A673 (cell line): ENCODE measurements at regions of chr16 and their contacts with region 1.

Region 1: GRCh38 chr16:4339909-4340308 is 11.2 kb downstream of the PAM16 start:
- DNase-seq: peak; percentile 90
- H3K4me3 ChIP-seq: no peak overlapping the region
- H3K27ac ChIP-seq: peak overlapping the region; percentile 53
- H3K4me1 ChIP-seq: peaks cover 23% of the 10 kb centered on the region
- H3K27me3 ChIP-seq: no peaks in the 10 kb centered on the region
- CTCF ChIP-seq: peak; percentile 54

Region 2: GRCh38 chr16:4097811-4098240 is 242.1 kb before region 1 on chr16:
- CTCF ChIA-PET with region 1: no interaction called
- POLR2A ChIA-PET with region 1: interaction called, 10 read pairs
- intact Hi-C with region 1: no loop called
- DNase-seq: no peak
- H3K4me3 ChIP-seq: no peak overlapping the region
- H3K27ac ChIP-seq: no peak overlapping the region
- H3K4me1 ChIP-seq: peaks cover 36% of the 10 kb centered on the region
- H3K27me3 ChIP-seq: no peaks in the 10 kb centered on the region
- CTCF ChIP-seq: no peak

Region 3: DNA sequence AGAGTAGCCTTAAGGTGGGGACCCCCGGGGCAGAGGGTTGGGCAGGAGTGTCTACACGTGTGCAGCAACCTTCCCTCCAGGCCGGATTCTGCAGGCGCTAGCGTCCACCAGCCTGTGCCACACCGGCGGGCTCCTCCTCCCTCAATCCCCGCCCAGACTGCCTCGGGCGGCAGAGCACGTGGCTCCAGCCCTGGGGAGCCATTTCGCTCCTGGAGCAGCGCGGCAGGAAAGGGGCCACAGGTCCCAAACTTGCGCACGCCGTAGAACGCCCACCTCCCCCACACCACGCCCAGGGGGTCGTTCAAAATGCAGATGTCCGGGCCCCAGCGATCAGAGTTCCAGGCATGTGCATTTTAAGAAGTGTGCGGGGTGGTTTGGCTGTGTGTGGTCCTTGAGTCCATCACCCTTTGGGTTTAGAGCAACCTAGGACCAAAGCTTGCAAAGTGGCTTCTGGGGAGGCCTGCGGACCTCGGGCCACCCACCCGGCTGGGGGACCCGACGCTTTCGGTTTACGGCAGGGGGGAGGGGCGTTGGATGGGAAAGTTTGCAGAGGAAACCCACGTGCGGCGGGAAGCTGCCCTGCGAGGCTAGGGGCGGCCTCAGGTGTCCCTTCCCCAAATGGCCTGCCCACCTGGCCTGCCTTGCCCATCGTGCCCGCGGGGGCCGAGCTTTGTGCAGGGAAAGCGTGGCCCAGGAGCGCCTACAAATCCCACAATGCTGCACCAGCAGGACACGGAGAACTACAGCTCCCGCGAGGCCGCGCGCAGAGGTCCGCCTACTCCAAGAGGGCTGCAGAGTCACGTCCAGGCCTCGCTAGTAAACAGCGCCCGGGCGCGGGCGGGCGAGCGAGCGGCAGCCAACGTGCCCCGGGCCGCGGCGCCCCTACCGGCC is 68.5 kb before region 1 on chr16:
- CTCF ChIA-PET with region 1: interaction called, 11 read pairs
- POLR2A ChIA-PET with region 1: no interaction called
- intact Hi-C with region 1: no loop called
- DNase-seq: peak; percentile 96
- H3K4me3 ChIP-seq: peak overlapping the region; percentile 87
- H3K27ac ChIP-seq: peak overlapping the region; percentile 91
- H3K4me1 ChIP-seq: peaks cover 20% of the 10 kb centered on the region
- H3K27me3 ChIP-seq: no peaks in the 10 kb centered on the region
- CTCF ChIP-seq: no peak

Region 4: GRCh38 chr16:4350787-4351659 is 11.1 kb after region 1 on chr16 and contains the start of gene PAM16:
- CTCF ChIA-PET with region 1: interaction called, 15 read pairs
- POLR2A ChIA-PET with region 1: no interaction called
- intact Hi-C with region 1: no loop called
- DNase-seq: peak; percentile 97
- H3K4me3 ChIP-seq: peak within 1 kb of the TSS; percentile 88
- H3K27ac ChIP-seq: peak within 1 kb of the TSS; percentile 90
- H3K4me1 ChIP-seq: peaks cover 4% of the 10 kb centered on the region
- H3K27me3 ChIP-seq: no peaks in the 10 kb centered on the region
- CTCF ChIP-seq: peak; percentile 20; the same call in 1 of the 2 replicates
- total RNA-seq, gene PAM16: 89.7 and 90.3 TPM in 2 replicates